ENCODE measurements at regions of chr2 and their contacts with region 1.

Region 1: DNA sequence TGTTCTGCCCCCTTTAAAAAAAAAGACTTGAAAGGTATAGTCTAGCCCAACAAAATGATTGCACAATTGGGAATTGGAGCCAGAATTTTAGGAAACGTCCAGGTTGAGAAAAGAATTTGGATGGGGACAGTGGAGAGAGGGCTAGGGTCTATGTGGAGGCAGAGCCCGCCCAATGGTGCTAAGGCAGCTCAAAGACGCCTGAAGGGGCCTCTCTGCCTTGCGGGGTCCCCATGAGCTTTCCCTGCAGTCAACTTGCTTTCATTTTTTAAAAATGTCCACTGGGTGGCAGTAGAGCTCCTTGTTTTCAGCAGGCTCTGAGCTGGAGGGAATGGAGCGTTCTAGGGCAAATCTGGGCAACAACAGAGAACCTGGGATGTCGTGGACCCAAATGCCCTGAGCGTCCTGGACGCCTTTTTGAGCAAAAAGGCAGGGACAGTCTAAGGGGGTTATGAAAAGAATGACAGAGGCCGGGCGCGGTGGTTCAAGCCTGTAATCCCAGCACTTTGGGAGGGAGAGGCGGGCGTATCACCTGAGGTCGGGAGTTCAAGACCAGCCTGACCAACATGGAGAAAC is 40.2 kb upstream of the ITM2C start:
- DNase-seq: peak; percentile 17 to 88 (median 55)
- ATAC-seq: peak; percentile 90
- H3K4me3 ChIP-seq: no peak overlapping the region
- H3K4me3 Mint-ChIP-seq: peak overlapping the region; percentile 64
- H3K27ac ChIP-seq: no peak overlapping the region
- H3K27ac Mint-ChIP-seq: no peak overlapping the region
- H3K4me1 ChIP-seq: peaks cover 5% of the 10 kb centered on the region
- H3K4me1 Mint-ChIP-seq: peaks cover 7% of the 10 kb centered on the region
- H3K27me3 ChIP-seq: peaks cover 11 to 12% of the 10 kb centered on the region in 2 experiments
- H3K27me3 Mint-ChIP-seq: peaks cover 29% of the 10 kb centered on the region
- CTCF ChIP-seq: peak; percentile 83

Region 2: GRCh38 chr2:230847883-230848388 is 23.4 kb after region 1 on chr2:
- CTCF ChIA-PET with region 1: interaction called, 39 read pairs
- POLR2A ChIA-PET with region 1: no interaction called
- intact Hi-C with region 1: loop called (anchors 1 to 2 kb)
- DNase-seq: peak; percentile 73 to 94 (median 87)
- ATAC-seq: peak; percentile 91
- H3K4me3 ChIP-seq: no peak overlapping the region
- H3K4me3 Mint-ChIP-seq: no peak overlapping the region
- H3K27ac ChIP-seq: no peak overlapping the region
- H3K27ac Mint-ChIP-seq: no peak overlapping the region
- H3K4me1 ChIP-seq: peaks cover 8% of the 10 kb centered on the region
- H3K4me1 Mint-ChIP-seq: peaks cover 6% of the 10 kb centered on the region
- H3K27me3 ChIP-seq: peaks cover 0 to 9% of the 10 kb centered on the region in 2 experiments
- H3K27me3 Mint-ChIP-seq: peaks cover 14% of the 10 kb centered on the region
- CTCF ChIP-seq: peak; percentile 82

Region 3: GRCh38 chr2:230902180-230902899 is 77.8 kb after region 1 on chr2:
- CTCF ChIA-PET with region 1: interaction called, 7 read pairs
- POLR2A ChIA-PET with region 1: no interaction called
- intact Hi-C with region 1: loop called in 1 of 2 experiments (anchors 2 kb)
- DNase-seq: peak in 7 of 9 experiments; percentile 40 to 78 (median 60)
- ATAC-seq: no peak
- H3K4me3 ChIP-seq: no peak overlapping the region
- H3K4me3 Mint-ChIP-seq: no peak overlapping the region
- H3K27ac ChIP-seq: no peak overlapping the region
- H3K27ac Mint-ChIP-seq: no peak overlapping the region
- H3K4me1 ChIP-seq: peaks cover 24% of the 10 kb centered on the region
- H3K4me1 Mint-ChIP-seq: peaks cover 34% of the 10 kb centered on the region
- H3K27me3 ChIP-seq: no peaks in the 10 kb centered on the region
- H3K27me3 Mint-ChIP-seq: no peaks in the 10 kb centered on the region
- CTCF ChIP-seq: peak; percentile 84

Region 4: DNA sequence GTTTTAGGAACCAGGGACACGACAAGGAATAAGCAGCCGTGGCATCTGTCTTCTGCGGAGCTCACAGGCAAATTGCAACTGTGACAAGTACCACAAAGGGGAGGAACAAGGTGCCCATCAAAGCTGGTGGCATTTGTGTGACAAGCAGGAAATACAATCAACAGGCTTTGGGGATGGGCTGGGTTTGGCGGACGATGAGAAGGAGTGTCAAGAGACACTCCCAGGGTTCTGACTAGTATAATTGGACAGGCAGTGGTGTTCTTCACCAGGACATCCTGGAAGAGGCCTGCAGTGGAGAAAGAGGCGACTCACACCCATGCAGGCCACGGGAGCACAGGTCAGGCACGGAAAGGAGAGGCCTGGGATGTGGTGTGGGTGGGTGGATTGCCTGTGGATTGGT is 157.2 kb after region 1 on chr2:
- CTCF ChIA-PET with region 1: interaction called, 100 read pairs
- POLR2A ChIA-PET with region 1: interaction called, 10 read pairs
- intact Hi-C with region 1: no loop called
- DNase-seq: peak in 8 of 9 experiments; percentile 22 to 72 (median 50)
- ATAC-seq: peak; percentile 78
- H3K4me3 ChIP-seq: no peak overlapping the region
- H3K4me3 Mint-ChIP-seq: peak overlapping the region; percentile 40
- H3K27ac ChIP-seq: no peak overlapping the region
- H3K27ac Mint-ChIP-seq: peak overlapping the region; percentile 67
- H3K4me1 ChIP-seq: peaks cover 23% of the 10 kb centered on the region
- H3K4me1 Mint-ChIP-seq: peaks cover 51% of the 10 kb centered on the region
- H3K27me3 ChIP-seq: no peaks in the 10 kb centered on the region
- H3K27me3 Mint-ChIP-seq: no peaks in the 10 kb centered on the region
- CTCF ChIP-seq: no peak

Region 5: DNA sequence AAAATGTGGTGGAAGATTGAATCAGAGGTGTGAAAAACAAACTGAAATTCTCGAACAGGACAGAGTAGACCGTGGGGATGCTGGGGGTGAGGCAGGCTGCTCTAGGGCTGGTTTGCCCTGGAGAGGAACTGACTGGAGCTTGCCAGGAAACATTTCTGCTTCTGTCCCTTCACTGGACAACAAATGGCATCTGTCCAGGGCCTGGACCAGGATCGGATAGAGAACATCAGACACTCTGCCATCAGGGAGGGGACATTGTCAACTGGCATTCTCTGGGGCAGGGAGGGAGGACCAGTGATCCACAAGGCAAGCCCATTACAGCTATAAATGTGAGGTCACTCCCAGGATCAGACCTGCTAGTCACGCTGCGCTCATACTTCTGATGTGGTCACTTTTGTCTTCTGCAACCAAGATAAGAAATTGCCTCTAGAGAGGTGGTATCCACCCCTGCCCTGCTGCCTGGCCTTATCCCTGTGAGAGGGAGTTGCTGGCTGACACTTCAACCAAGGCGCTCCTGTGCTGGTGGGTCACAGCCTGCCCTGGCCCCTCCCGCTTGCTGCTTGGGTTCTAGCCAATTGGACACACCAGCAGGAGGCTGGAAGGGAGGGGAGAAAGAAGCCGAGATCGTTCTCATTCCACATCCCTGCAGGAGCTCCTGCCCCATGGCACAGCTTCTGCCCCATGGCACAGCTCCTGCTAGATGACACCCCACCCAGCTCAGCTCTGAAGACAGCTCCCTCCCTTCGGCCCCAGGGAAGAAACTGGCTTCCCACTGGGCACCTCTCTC is 1093.0 kb after region 1 on chr2:
- CTCF ChIA-PET with region 1: no interaction called
- POLR2A ChIA-PET with region 1: no interaction called
- intact Hi-C with region 1: no loop called
- DNase-seq: no peak
- ATAC-seq: no peak
- H3K4me3 ChIP-seq: no peak overlapping the region
- H3K4me3 Mint-ChIP-seq: no peak overlapping the region
- H3K27ac ChIP-seq: no peak overlapping the region
- H3K27ac Mint-ChIP-seq: no peak overlapping the region
- H3K4me1 ChIP-seq: no peaks in the 10 kb centered on the region
- H3K4me1 Mint-ChIP-seq: no peaks in the 10 kb centered on the region
- H3K27me3 ChIP-seq: no peaks in the 10 kb centered on the region
- H3K27me3 Mint-ChIP-seq: peaks cover 5% of the 10 kb centered on the region
- CTCF ChIP-seq: no peak

Measured in CD8-positive, alpha-beta T cell (primary cell).